MCF 10A (cell line): ENCODE measurements at regions of chr4 and their contacts with region 1.

Region 1: GRCh38 chr4:121307445-121308327 is 73.1 kb downstream of the QRFPR start:
- DNase-seq: peak; percentile 87
- H3K4me3 Mint-ChIP-seq: no peak overlapping the region
- H3K27ac Mint-ChIP-seq: no peak overlapping the region
- H3K4me1 Mint-ChIP-seq: peaks cover 10% of the 10 kb centered on the region
- H3K27me3 Mint-ChIP-seq: no peaks in the 10 kb centered on the region
- CTCF ChIP-seq: peak; percentile 79

Region 2: GRCh38 chr4:121096629-121097028 is 211.1 kb before region 1 on chr4:
- CTCF ChIA-PET with region 1: interaction called, 6 read pairs
- POLR2A ChIA-PET with region 1: interaction called, 5 read pairs
- intact Hi-C with region 1: loop called (anchors 5 kb)
- DNase-seq: peak; percentile 36
- H3K4me3 Mint-ChIP-seq: no peak overlapping the region
- H3K27ac Mint-ChIP-seq: no peak overlapping the region
- H3K4me1 Mint-ChIP-seq: no peaks in the 10 kb centered on the region
- H3K27me3 Mint-ChIP-seq: no peaks in the 10 kb centered on the region
- CTCF ChIP-seq: peak; percentile 34

Region 3: DNA sequence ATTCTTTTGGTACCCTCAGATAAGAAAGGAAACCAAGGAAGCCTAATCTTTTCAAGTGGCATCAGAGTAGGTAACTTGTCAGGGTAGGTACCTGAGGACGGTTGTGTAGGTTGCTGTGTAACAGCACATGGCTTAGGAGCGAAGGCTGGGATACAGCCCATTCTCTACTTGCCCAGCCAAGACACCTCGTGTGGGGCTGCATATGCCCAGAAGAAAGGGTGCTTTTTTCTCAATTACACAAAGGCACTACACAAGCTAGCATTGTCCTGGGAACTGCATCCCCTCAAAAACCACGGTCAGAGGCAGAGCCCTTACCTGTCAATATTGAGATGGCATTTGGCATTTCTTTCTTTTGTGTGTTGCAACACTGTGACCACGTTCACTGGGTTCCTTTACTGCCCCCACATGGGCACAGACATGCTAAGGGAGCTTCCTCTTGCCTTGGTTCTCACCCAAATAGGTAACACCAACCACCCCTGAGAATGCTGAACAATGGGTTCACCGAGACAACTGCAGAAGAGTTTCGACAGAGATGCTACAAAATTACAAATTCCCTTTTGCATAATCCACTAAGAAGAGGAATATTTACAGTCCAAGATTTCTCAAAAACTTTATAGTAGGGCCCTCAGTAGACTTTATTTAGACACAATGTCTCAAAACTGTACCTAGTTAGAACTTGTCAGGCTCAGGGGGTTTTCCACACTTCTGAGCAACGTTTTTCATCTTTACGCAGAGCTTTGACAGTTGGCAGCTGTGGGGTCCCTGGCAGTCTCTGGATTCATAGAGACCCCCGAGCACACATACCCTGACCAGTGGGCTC is 107.7 kb before region 1 on chr4:
- CTCF ChIA-PET with region 1: interaction called, 52 read pairs
- POLR2A ChIA-PET with region 1: no interaction called
- intact Hi-C with region 1: no loop called
- DNase-seq: peak; percentile 17
- H3K4me3 Mint-ChIP-seq: no peak overlapping the region
- H3K27ac Mint-ChIP-seq: no peak overlapping the region
- H3K4me1 Mint-ChIP-seq: peaks cover 6% of the 10 kb centered on the region
- H3K27me3 Mint-ChIP-seq: no peaks in the 10 kb centered on the region
- CTCF ChIP-seq: no peak

Region 4: DNA sequence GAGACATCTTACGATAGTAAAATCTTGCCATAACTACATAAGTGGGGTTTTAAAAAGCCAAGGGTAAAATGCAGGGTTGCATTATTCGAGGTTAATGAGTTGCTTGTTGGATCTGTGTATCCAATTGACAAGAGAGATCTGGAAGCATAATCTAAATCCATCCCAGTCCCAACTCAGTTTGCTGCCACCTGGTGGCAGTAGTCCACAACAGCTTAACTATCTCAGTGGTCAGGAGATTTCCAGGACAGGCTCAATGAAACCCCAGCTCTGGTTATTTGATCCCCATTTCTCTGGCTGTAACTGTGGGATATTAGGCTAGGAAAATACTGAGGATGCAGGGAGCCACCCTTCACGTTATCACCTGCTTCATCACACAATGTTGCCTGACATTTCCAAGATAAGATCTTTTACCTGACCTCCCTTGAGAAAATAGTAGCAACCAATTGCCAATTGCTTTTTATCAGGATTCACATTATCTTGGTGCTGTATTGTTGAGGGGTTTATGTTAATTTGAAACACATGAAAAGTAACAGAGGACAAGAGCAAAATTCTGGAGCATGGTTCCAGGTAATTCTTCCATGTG is 55.4 kb before region 1 on chr4:
- CTCF ChIA-PET with region 1: interaction called, 26 read pairs
- POLR2A ChIA-PET with region 1: no interaction called
- intact Hi-C with region 1: loop called (anchors 1 kb)
- DNase-seq: peak; percentile 85
- H3K4me3 Mint-ChIP-seq: no peak overlapping the region
- H3K27ac Mint-ChIP-seq: no peak overlapping the region
- H3K4me1 Mint-ChIP-seq: peaks cover 14% of the 10 kb centered on the region
- H3K27me3 Mint-ChIP-seq: no peaks in the 10 kb centered on the region
- CTCF ChIP-seq: peak; percentile 66

Region 5: GRCh38 chr4:121277624-121278023 is 30.1 kb before region 1 on chr4:
- CTCF ChIA-PET with region 1: interaction called, 28 read pairs
- POLR2A ChIA-PET with region 1: interaction called, 5 read pairs
- intact Hi-C with region 1: no loop called
- DNase-seq: peak; percentile 39
- H3K4me3 Mint-ChIP-seq: no peak overlapping the region
- H3K27ac Mint-ChIP-seq: no peak overlapping the region
- H3K4me1 Mint-ChIP-seq: peaks cover 7% of the 10 kb centered on the region
- H3K27me3 Mint-ChIP-seq: no peaks in the 10 kb centered on the region
- CTCF ChIP-seq: no peak

Region 6: GRCh38 chr4:121324331-121324730 is 16.6 kb after region 1 on chr4:
- CTCF ChIA-PET with region 1: interaction called, 25 read pairs
- POLR2A ChIA-PET with region 1: no interaction called
- intact Hi-C with region 1: no loop called
- DNase-seq: no peak
- H3K4me3 Mint-ChIP-seq: no peak overlapping the region
- H3K27ac Mint-ChIP-seq: no peak overlapping the region
- H3K4me1 Mint-ChIP-seq: no peaks in the 10 kb centered on the region
- H3K27me3 Mint-ChIP-seq: no peaks in the 10 kb centered on the region
- CTCF ChIP-seq: no peak